ENCODE measurements at regions of chr4 and their contacts with region 1.

Region 1: GRCh38 chr4:183840311-183840710 is 64.8 kb upstream of the STOX2 start:
- DNase-seq: peak; percentile 86
- H3K4me3 ChIP-seq: no peak overlapping the region
- H3K27ac ChIP-seq: no peak overlapping the region
- H3K4me1 ChIP-seq: no peaks in the 10 kb centered on the region
- H3K27me3 ChIP-seq: no peaks in the 10 kb centered on the region
- CTCF ChIP-seq: peak; percentile 89

Region 2: GRCh38 chr4:183541010-183541751 is 299.1 kb before region 1 on chr4:
- CTCF ChIA-PET with region 1: no interaction called
- POLR2A ChIA-PET with region 1: no interaction called
- intact Hi-C with region 1: no loop called
- DNase-seq: no peak
- H3K4me3 ChIP-seq: no peak overlapping the region
- H3K27ac ChIP-seq: no peak overlapping the region
- H3K4me1 ChIP-seq: peaks cover 6% of the 10 kb centered on the region
- H3K27me3 ChIP-seq: no peaks in the 10 kb centered on the region
- CTCF ChIP-seq: no peak

Region 3: GRCh38 chr4:183808097-183808456 is 32.2 kb before region 1 on chr4:
- CTCF ChIA-PET with region 1: no interaction called
- POLR2A ChIA-PET with region 1: no interaction called
- intact Hi-C with region 1: no loop called
- DNase-seq: no peak
- H3K4me3 ChIP-seq: no peak overlapping the region
- H3K27ac ChIP-seq: no peak overlapping the region
- H3K4me1 ChIP-seq: no peaks in the 10 kb centered on the region
- H3K27me3 ChIP-seq: no peaks in the 10 kb centered on the region
- CTCF ChIP-seq: no peak

Region 4: GRCh38 chr4:184168406-184169019 is 328.2 kb after region 1 on chr4:
- CTCF ChIA-PET with region 1: interaction called, 3 read pairs
- POLR2A ChIA-PET with region 1: no interaction called
- intact Hi-C with region 1: loop called (anchors 1 kb)
- DNase-seq: peak; percentile 61
- H3K4me3 ChIP-seq: no peak overlapping the region
- H3K27ac ChIP-seq: no peak overlapping the region
- H3K4me1 ChIP-seq: no peaks in the 10 kb centered on the region
- H3K27me3 ChIP-seq: no peaks in the 10 kb centered on the region
- CTCF ChIP-seq: peak; percentile 97

Region 5: DNA sequence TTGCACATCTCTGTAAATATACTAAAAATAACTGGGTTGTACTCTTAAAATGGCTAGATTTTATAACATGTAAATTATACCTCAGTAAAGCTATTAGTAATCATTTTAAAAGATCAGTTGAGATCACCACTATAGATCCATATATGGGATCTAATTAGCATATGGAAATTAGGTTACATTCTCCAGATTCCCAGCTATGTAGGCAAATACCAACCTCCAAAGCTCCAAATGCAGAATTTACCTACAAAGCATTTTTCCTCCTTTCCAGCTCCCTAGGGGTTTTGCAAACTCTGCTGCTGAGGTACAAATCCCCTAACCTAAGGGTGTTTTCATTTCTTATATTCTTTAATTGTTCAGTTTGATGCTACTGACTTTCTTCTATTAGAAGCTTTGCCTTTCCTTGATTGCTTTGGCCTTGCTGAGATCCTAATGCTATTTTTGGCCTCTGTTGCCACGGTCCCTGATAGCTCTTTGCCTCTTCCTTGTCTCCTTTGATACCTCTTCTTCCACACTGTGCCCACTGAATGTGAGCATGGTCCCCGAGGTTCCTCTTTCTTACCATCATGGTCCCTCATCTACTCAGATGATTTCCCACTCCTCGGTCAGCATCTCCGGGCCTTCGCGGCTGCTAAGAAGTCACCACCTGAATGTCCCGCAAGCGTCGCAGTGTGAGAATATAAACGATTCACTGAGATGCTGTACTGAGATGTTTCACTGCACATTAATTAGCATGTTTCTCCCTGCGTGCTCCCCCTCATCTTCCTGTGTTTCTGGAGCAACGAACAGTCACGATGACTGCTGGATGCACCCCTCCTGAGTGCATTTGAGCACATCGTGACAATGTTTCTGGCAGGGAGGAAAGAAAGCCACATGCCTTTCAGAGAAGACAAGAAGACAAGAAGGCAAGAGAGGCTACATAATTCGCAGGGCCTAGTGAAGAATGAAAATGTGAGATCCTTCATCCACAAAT is 353.5 kb after region 1 on chr4:
- CTCF ChIA-PET with region 1: no interaction called
- POLR2A ChIA-PET with region 1: no interaction called
- intact Hi-C with region 1: no loop called
- DNase-seq: no peak
- H3K4me3 ChIP-seq: no peak overlapping the region
- H3K27ac ChIP-seq: no peak overlapping the region
- H3K4me1 ChIP-seq: no peaks in the 10 kb centered on the region
- H3K27me3 ChIP-seq: no peaks in the 10 kb centered on the region
- CTCF ChIP-seq: no peak

Region 6: GRCh38 chr4:184250795-184251669 is 410.7 kb after region 1 on chr4:
- CTCF ChIA-PET with region 1: no interaction called
- POLR2A ChIA-PET with region 1: no interaction called
- intact Hi-C with region 1: loop called (anchors 2 kb)
- DNase-seq: peak; percentile 87
- H3K4me3 ChIP-seq: no peak overlapping the region
- H3K27ac ChIP-seq: no peak overlapping the region
- H3K4me1 ChIP-seq: no peaks in the 10 kb centered on the region
- H3K27me3 ChIP-seq: no peaks in the 10 kb centered on the region
- CTCF ChIP-seq: peak; percentile 79